B cell (primary cell): ENCODE measurements at regions of chr6 and their contacts with region 1.

Region 1: DNA sequence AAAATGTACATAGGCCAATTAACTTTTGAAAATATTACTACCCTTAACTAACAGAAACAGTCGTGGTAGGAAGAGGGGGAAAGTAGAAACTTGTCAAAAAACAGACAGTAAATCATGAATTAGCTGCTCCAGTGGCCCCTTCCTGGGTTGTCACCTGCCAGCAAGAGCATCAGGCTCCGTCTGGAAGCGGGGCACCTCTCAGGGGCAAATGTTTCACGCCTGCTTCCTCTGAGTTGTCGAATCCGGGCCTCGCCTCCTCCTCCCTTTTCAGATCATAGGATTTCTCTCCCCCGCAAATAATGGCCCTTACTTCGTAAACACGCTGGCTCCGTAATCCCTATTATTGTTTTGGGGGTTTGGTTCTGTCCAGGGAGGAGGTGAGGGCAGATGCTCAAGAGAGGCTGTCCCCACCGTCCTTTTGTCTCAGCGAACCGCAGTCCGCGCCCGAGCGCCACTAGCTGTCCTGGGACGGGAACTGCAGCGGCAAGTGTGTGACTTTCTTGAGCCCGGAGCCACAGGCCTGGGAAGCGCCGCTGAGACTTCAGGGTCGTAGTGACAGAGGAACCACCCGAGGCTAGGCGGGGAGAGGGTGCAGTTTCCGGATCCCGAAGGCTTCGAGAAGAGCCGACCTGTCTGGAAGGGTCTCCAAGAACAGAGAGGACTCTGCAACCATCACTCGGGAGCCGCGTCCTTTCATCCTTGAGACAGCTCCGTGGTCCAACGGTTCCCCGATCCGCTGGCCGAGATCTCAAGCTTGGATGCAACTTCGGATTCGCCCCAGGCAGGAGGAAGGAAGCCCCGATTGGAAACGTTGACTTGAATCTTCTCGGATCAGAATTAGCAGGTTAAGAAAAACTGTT is 214.5 kb upstream of the ZNF184 start:
- DNase-seq: peak; percentile 87
- ATAC-seq: peak; percentile 73
- H3K4me3 ChIP-seq: peak overlapping the region; percentile 27 to 99 (median 77)
- H3K4me3 Mint-ChIP-seq: peak overlapping the region; percentile 93
- H3K27ac ChIP-seq: peak overlapping the region in 1 of 2 donors; percentile 32
- H3K27ac Mint-ChIP-seq: peak overlapping the region; percentile 91
- H3K4me1 ChIP-seq: peaks cover 7 to 15% of the 10 kb centered on the region in 2 donors
- H3K4me1 Mint-ChIP-seq: peaks cover 16% of the 10 kb centered on the region
- H3K27me3 ChIP-seq: peaks cover 0 to 8% (median 2%) of the 10 kb centered on the region in 4 experiments
- H3K27me3 Mint-ChIP-seq: peaks cover 4% of the 10 kb centered on the region
- CTCF ChIP-seq: peak; percentile 69

Region 2: GRCh38 chr6:27472617-27473400 is 214.6 kb before region 1 on chr6 and contains the start of gene ZNF184:
- CTCF ChIA-PET with region 1: no interaction called
- POLR2A ChIA-PET with region 1: no interaction called
- intact Hi-C with region 1: loop called (anchors 1 kb)
- DNase-seq: peak; percentile 96
- ATAC-seq: peak; percentile 92
- H3K4me3 ChIP-seq: peak within 1 kb of the TSS; percentile 75 to 93 (median 83)
- H3K4me3 Mint-ChIP-seq: peak within 1 kb of the TSS; percentile 100
- H3K27ac ChIP-seq: peak within 1 kb of the TSS; percentile 89 to 97
- H3K27ac Mint-ChIP-seq: peak within 1 kb of the TSS; percentile 99
- H3K4me1 ChIP-seq: peaks cover 16 to 22% of the 10 kb centered on the region in 2 donors
- H3K4me1 Mint-ChIP-seq: peaks cover 44% of the 10 kb centered on the region
- H3K27me3 ChIP-seq: no peaks in the 10 kb centered on the region
- H3K27me3 Mint-ChIP-seq: no peaks in the 10 kb centered on the region
- CTCF ChIP-seq: peak; percentile 31
- total RNA-seq, gene ZNF184: 11.8 TPM in 2 replicates

Region 3: DNA sequence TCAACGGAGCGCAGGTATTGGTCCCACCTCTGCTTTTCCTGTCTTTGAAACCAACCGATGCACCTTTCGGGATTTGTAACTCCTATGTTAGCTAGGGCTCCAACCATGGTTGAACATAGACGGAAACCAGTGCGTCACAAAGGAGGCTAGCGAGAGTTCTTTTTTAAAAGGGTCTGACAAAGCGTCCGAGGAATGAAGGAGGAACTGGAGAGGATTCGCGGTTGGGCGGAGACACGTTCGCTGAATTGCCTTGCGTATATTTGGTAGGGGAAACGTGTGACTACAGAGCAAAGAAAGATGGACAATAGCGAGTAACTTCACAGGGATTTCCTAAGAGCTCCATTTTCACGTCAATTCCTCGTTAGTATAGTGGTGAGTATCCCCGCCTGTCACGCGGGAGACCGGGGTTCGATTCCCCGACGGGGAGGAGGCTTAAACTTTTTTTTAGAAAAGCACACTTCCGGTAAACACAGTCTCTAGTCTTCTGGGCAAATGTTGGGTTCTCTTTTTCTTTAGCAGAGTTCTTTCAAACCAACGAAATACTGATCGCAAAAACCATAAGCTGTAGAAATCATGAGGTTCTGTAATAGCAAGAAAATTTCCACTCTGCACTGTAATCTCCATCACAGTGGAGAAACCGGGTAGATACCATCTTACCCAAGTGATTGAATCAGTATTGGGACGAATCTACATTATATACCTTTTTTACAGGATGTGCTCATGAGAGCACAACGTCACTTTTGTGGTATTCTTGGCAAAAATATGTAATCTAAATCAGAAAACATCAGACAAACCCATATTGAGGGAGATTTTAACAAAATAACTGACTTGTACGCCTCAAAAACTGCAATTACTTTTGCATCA is 207.8 kb before region 1 on chr6:
- CTCF ChIA-PET with region 1: interaction called, 6 read pairs
- POLR2A ChIA-PET with region 1: interaction called, 4 read pairs
- intact Hi-C with region 1: loop called (anchors 2 kb)
- DNase-seq: peak; percentile 96
- ATAC-seq: peak; percentile 77
- H3K4me3 ChIP-seq: peak overlapping the region; percentile 88 to 97 (median 95)
- H3K4me3 Mint-ChIP-seq: no peak overlapping the region
- H3K27ac ChIP-seq: peak overlapping the region; percentile 98
- H3K27ac Mint-ChIP-seq: no peak overlapping the region
- H3K4me1 ChIP-seq: peaks cover 15 to 17% of the 10 kb centered on the region in 2 donors
- H3K4me1 Mint-ChIP-seq: peaks cover 6% of the 10 kb centered on the region
- H3K27me3 ChIP-seq: no peaks in the 10 kb centered on the region
- H3K27me3 Mint-ChIP-seq: no peaks in the 10 kb centered on the region
- CTCF ChIP-seq: no peak

Region 4: DNA sequence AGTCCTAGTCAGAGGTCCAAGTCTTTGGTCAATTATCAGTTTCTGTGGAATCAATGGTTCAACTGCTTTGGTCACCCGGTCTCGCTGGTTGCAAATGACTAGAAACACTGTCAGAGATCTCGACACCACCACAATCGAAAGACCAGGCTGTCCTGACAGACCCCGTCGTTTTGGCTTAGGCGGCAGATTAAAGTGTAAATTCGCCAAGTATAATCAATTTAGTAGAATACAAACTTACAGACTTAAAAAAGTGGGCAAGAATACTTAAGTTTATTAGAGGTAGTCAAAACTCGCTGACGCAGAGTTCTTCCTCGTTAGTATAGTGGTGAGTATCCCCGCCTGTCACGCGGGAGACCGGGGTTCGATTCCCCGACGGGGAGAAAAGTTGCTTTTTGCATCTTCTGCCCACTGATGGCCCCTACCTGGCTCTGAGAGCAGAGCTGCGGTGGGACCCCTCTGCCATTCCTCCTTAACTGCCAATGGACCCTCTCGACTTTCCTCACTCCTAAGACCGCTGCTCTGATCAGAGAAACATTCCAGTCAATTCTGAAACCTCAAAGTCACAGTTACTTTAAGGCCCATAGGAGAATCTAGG is 183.9 kb before region 1 on chr6:
- CTCF ChIA-PET with region 1: no interaction called
- POLR2A ChIA-PET with region 1: no interaction called
- intact Hi-C with region 1: loop called (anchors 10 kb)
- DNase-seq: peak; percentile 89
- ATAC-seq: peak; percentile 44
- H3K4me3 ChIP-seq: peak overlapping the region; percentile 48 to 82 (median 74)
- H3K4me3 Mint-ChIP-seq: peak overlapping the region; percentile 85
- H3K27ac ChIP-seq: peak overlapping the region in 1 of 2 donors; percentile 64
- H3K27ac Mint-ChIP-seq: peak overlapping the region; percentile 81
- H3K4me1 ChIP-seq: peaks cover 9 to 24% of the 10 kb centered on the region in 2 donors
- H3K4me1 Mint-ChIP-seq: peaks cover 38% of the 10 kb centered on the region
- H3K27me3 ChIP-seq: peaks cover 0 to 4% (median 1%) of the 10 kb centered on the region in 4 experiments
- H3K27me3 Mint-ChIP-seq: peaks cover 9% of the 10 kb centered on the region
- CTCF ChIP-seq: no peak

Region 5: GRCh38 chr6:27642744-27643456 is 44.5 kb before region 1 on chr6:
- CTCF ChIA-PET with region 1: no interaction called
- POLR2A ChIA-PET with region 1: no interaction called
- intact Hi-C with region 1: no loop called
- DNase-seq: no peak
- ATAC-seq: no peak
- H3K4me3 ChIP-seq: no peak overlapping the region
- H3K4me3 Mint-ChIP-seq: no peak overlapping the region
- H3K27ac ChIP-seq: no peak overlapping the region
- H3K27ac Mint-ChIP-seq: no peak overlapping the region
- H3K4me1 ChIP-seq: no peaks in the 10 kb centered on the region
- H3K4me1 Mint-ChIP-seq: no peaks in the 10 kb centered on the region
- H3K27me3 ChIP-seq: peaks cover 0 to 11% (median 2%) of the 10 kb centered on the region in 4 experiments
- H3K27me3 Mint-ChIP-seq: peaks cover 29% of the 10 kb centered on the region
- CTCF ChIP-seq: no peak